BJ (cell line): ENCODE measurements at regions of chr2 and their contacts with region 1.

Region 1: DNA sequence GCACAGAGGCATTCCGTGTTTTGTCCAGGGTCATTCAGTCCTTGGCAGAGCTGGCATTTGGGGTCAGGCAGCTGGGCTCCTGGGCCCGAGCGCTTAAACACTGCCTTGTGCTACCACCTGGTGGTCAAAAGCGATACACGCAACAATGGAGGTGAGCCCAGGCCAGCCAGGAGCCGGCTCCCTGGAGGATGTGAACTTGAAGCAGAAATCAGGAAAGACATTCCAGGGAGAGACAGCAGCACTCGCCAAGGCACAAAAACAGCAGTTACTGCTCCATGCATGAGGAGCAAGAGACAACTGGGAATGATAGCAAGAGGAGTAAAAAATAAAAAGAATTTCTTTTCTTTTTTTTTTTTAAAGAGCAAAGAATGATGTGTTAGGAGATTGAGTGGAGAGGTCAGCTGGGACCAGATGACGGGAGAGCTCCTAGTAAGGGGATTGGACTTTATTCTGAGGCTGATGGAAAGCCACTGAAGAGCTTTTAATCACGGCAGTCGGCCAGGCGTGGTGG is 20.7 kb downstream of the SCYGR8 start:
- DNase-seq: peak; percentile 4
- H3K4me3 ChIP-seq: no peak overlapping the region
- H3K27me3 ChIP-seq: no peaks in the 10 kb centered on the region
- CTCF ChIP-seq: peak; percentile 86

Region 2: DNA sequence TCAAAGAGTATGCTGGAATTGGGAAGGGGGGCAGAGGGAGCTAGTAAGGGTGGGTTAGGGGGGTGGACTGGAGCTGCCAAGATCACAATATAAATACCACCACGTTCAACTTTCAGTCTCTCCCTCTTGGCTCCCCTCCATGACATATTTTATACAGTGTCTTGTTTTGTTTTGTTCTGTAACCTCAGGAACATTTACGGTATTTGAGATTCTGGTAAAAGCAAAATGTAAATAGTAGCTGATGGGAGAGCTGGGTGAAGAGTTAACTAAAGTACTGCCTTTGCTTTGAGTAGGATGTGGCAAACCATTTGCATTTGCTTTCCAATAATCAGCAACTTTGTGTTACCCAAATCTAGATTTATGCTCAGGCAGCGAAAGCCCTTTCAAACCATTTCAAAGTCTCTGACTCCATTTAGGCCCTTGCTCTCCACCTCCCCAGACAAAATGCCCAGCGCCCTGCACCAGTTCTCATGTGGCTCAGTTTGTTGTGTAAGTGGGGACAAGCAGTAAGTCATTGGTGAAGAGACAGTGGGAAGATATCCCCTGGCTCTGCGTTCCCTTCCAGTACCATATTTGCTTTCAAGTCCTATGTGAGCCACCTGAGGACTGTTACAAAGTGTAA is 984.2 kb before region 1 on chr2:
- CTCF ChIA-PET with region 1: no interaction called
- POLR2A ChIA-PET with region 1: no interaction called
- DNase-seq: no peak
- H3K4me3 ChIP-seq: no peak overlapping the region
- H3K27me3 ChIP-seq: no peaks in the 10 kb centered on the region
- CTCF ChIP-seq: no peak

Region 3: DNA sequence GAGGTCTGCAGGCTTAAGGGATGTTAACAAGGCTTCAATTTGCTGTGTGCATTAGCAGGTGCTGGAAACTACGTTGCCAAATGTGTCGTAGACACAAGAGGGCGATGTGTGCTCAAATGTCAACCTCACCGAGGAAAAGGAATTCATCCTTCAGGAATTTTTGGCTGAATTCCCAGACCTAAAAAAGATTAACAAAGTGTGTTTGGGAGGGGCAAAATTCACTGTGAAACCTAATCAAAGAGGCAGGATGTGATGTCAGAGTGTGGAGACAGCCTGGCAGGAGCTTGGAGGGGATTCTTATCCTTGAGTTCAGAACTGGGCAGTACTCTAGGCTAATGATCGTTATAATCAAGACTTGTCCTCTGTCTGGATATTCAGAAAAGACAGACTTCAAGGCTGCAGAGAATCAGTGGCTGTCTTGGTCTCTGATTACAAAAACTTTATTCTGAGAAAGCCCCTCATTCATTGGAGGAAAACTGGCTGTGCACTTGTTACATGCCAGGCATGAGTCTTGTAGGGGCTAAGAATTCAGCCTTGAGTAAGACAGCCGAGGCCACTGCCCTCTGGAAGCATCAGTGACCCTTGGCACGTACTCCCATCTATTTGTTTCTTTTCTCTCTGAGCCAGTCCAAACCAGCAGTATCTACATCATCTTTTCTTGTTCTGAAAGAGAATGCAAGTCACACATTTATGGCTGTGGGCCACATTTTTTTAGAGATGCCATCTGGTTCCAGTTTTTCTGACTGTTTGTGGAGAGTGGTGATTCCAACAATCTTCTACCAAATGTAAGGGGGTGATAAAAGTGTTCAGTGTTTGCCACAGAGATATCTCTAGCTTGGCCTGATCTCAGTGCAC is 360.0 kb before region 1 on chr2:
- CTCF ChIA-PET with region 1: interaction called, 65 read pairs
- POLR2A ChIA-PET with region 1: no interaction called
- DNase-seq: peak; percentile 86
- H3K4me3 ChIP-seq: no peak overlapping the region
- H3K27me3 ChIP-seq: no peaks in the 10 kb centered on the region
- CTCF ChIP-seq: peak; percentile 79

Region 4: DNA sequence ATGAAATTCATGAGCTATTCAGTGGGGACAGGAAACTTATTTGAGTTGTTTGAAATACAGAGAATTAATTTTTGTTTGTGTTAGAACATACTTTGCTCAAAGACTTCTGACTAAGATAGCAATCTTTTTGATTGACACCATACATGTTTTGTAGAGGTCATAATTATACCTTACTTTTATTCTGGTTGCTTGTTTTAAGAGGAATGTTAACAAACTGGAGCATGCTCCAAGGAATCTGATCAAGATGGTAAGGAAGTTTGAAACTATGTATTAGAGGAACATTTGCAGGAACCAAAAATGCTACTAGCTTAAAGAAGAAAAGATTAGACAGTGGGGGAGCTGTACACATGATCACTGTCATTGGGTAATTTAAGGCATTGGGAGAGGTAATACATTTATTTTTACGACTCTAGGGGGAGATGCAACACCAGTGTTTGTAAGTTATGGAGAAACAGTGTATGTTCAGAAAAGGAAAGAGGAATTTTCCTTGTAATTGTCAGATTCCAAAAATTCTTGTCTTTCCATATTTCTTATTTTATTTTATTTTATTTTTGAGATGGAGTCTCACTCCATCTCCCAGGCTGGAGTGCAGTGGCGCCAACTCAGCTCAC is 286.5 kb before region 1 on chr2:
- CTCF ChIA-PET with region 1: interaction called, 11 read pairs
- POLR2A ChIA-PET with region 1: no interaction called
- DNase-seq: no peak
- H3K4me3 ChIP-seq: no peak overlapping the region
- H3K27me3 ChIP-seq: no peaks in the 10 kb centered on the region
- CTCF ChIP-seq: peak; percentile 24

Region 5: GRCh38 chr2:227657199-227657845 is 109.1 kb before region 1 on chr2:
- CTCF ChIA-PET with region 1: interaction called, 39 read pairs
- POLR2A ChIA-PET with region 1: no interaction called
- DNase-seq: no peak
- H3K4me3 ChIP-seq: no peak overlapping the region
- H3K27me3 ChIP-seq: no peaks in the 10 kb centered on the region
- CTCF ChIP-seq: no peak